Posterior vena cava (tissue), 2 donors: ENCODE measurements at regions of chr2 and their contacts with region 1.

Region 1: DNA sequence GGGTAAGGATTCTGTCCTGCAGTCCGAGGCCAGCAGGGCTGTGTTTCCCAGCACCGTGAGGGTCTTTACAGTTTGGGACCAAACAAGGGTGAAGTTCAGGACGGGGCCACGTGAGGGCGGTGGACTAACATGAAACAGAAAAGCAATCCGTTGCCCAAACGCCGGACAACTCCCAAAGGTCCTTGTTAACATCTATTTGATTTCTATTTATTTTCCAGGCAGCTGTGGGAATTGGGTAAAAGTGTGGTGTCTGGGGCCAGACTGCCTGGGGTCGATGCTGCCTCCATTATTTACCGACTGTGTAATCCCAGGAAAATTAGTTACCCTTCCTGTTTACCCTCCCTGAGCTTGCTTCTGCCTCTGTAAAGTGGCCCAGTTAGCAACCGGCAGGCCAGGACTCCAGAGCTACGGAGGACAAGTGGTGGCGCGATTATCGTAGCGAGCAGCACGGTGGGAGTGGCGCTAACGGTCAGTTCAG is 66.3 kb upstream of the TCF7L1 start:
- DNase-seq: peak; percentile 92

Region 2: GRCh38 chr2:85302121-85302520 is 235.2 kb after region 1 on chr2:
- intact Hi-C with region 1: loop called (anchors 5 kb)
- DNase-seq: no peak